ENCODE measurements at regions of chr1 and their contacts with region 1.

Region 1: DNA sequence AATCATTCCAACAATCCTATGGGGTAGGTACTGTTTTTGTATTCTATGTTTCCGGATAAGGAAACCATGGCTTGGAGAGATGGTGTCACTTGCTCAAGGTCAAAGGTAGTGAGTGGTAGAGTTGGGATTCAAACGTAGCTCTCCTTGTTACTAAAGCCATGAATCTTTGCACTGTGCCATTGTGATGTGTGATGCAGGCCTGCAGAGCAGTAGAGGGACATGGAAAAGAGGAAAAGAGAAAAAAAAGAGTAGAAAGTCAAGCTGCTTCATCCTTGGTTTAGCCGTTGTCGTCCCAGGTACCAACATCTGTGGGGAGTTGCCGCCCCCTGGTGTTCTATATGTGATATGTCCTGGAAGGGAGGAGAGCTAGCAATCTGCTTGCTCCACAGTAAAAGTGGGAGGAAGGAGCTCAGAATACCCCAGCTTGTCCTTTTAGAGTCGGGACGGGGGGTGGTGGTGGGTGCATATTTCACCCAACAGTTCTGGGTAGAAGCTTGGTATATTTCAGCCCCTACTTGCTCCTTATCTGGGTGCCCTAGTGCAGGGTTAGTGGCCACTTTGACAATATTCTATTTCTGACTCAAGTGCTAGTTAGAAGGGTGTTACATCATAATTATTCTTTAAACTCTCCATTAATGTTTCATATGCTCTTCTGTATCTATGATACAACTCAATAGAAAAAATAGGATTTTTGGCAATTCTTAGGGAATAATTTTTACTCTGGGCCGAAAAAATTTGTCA is 98.4 kb downstream of the EBNA1BP2 start:
- DNase-seq: peak; percentile 86
- H3K4me3 ChIP-seq: no peak overlapping the region
- H3K27ac ChIP-seq: no peak overlapping the region
- H3K4me1 ChIP-seq: peaks cover 0 to 15% (median 11%) of the 10 kb centered on the region in 4 donors
- H3K27me3 ChIP-seq: no peaks in the 10 kb centered on the region
- CTCF ChIP-seq: peak; percentile 80 to 89 (median 85)
- EP300 ChIP-seq: no peak
- POLR2A ChIP-seq: no peak

Region 2: DNA sequence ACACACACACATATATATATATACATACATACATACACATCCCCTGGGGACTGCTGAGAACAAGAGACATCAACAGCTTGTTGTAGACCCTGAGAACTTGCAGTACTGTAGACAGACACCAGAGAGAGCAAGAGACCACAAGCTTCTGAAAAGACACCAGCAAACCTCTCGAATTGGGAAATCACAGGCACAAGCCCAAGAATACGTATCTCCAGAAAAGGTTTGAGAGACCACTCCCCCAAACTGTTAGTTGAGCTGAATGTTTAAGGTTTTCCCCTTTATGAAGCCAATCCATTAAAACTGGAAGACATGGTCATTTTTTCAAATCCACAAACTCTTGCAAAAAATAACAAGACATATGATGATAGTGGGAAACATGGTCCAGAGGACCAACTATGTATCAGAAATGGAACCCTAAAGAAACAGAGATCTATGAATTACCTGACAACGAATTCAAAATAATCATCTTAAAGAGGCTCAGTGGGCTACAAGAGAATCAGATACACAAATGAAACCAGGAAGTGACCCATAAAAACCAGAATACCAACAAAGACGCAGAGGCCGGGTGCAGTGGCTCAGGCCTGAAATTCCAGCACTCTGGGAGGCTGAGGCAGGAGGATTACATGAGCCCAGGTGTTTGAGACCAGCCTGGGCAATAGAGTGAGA is 160.1 kb before region 1 on chr1:
- intact Hi-C with region 1: loop called (anchors 1 kb)
- DNase-seq: no peak
- H3K4me3 ChIP-seq: no peak overlapping the region
- H3K27ac ChIP-seq: no peak overlapping the region
- H3K4me1 ChIP-seq: no peaks in the 10 kb centered on the region
- H3K27me3 ChIP-seq: no peaks in the 10 kb centered on the region
- CTCF ChIP-seq: peak; percentile 74 to 95 (median 94)
- EP300 ChIP-seq: no peak
- POLR2A ChIP-seq: no peak

Region 3: GRCh38 chr1:42971841-42972291 is 101.8 kb before region 1 on chr1:
- intact Hi-C with region 1: loop called (anchors 5 kb)
- DNase-seq: no peak
- H3K4me3 ChIP-seq: no peak overlapping the region
- H3K27ac ChIP-seq: no peak overlapping the region
- H3K4me1 ChIP-seq: peaks cover 0 to 9% (median 8%) of the 10 kb centered on the region in 4 donors
- H3K27me3 ChIP-seq: no peaks in the 10 kb centered on the region
- CTCF ChIP-seq: no peak
- EP300 ChIP-seq: no peak
- POLR2A ChIP-seq: no peak

Region 4: DNA sequence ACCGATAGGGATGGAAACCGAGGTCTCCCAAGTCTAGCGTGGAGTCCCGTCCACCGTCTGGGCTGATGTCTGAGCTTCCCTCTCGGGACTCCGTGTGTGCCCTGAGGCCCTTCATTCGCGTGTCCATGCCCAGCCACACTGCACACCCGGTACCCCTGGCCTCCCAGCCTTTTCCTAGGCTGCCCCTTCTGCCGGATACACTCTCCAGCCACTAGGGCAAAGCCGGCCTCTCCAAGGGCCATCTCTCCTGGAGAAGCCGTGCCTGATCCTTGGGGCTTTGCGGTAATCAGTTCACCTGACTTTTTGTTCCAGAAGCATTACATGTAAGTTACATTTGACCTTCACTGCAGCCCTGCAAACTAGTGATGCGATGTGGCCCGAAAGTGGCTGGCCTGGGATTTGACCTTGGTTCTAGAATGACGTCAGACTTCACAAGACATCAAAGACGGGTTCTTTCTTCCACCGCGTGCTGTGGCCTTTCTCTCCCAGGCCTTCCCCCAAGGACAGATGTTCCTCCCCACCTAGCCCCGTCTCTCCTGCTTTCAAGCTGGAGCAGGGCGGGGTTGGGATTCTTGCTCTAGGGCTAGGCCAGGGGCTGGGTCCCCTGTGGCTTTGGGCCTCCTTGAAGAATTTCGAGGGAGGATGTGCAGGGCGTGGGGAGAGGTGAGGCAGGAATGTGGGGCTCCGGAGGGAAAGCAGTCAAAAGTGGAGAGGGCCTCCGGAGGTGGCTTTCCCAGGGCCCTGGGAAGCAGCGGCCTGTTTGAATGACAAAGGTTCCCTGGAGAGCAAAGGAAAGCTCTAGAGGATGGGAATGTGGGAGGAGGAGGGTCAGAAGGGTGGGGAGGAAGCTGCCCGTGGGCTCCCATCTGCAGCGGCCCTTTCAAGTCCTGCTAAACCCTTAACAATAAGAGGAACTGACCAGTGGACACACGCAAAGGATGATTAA is 65.3 kb before region 1 on chr1:
- intact Hi-C with region 1: no loop called
- DNase-seq: no peak
- H3K4me3 ChIP-seq: no peak overlapping the region
- H3K27ac ChIP-seq: no peak overlapping the region
- H3K4me1 ChIP-seq: no peaks in the 10 kb centered on the region
- H3K27me3 ChIP-seq: peaks cover 0 to 30% (median 15%) of the 10 kb centered on the region in 3 donors
- CTCF ChIP-seq: no peak
- EP300 ChIP-seq: no peak
- POLR2A ChIP-seq: no peak